Activated T-helper 1 cell treated with anti-CD3 and anti-CD28 coated beads, Interleukin-12 subunit alpha, Interleukin-12 subunit beta, Interleukin-2, Interleukin-4 antibody, amounts not matched to agents 30 ng/mL and 10 ng/mL and 1 ng/mL, durations not matched to agents 14 hours and 24 hours and 36 hours (primary cell): ENCODE measurements at regions of chr16 and their contacts with region 1.

Region 1: DNA sequence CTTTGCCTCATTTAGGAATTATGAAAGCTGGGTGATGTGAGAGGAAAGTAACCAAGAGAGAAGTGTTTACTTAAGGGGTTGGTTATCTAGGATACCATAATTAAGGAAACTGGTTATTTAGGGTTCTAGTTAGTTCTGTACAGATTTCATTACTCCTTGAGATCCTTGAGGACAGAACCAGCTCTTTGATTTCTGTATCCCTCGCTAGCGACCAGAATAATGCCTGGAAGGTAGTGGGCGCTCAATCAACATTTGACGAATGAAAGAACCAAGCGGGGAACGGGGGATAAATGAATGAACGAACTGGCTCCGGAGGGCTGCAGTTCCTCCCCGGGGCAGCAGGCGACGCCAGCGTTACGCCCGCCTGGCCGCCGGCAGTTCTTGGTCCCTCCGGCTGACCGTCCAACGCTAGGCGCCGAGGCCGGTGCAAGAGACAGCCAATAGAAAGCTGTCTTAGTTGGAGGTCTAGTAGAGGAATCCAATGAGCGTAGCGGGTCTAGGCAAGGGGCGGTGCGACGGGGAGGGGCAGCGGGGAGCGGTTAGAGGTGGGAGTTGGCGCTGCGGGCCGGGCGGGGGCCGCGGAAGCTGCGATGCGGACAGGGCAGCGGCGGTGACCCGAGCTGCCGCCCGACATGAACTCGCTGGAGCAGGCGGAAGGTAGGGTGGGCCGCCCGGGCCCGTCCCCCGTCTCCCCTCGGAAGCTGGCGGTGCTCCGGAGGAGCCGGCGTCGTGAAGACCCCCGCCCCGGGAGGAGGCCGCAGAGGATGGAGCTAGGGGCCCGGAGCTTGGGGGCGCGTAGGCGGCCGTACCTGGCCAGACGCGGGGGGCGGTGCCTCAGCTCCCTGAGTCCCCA is at the start of gene CNEP1R1:
- DNase-seq: peak; percentile 92
- H3K4me3 Mint-ChIP-seq: peak within 1 kb of the TSS; percentile 96
- H3K27ac Mint-ChIP-seq: peak within 1 kb of the TSS; percentile 84
- H3K4me1 Mint-ChIP-seq: peaks cover 26% of the 10 kb centered on the region
- H3K27me3 Mint-ChIP-seq: peaks cover 11% of the 10 kb centered on the region
- total RNA-seq, gene CNEP1R1: 21.9 and 22.7 TPM in 2 replicates

Region 2: GRCh38 chr16:49986351-49987124 is 38.4 kb before region 1 on chr16:
- intact Hi-C with region 1: no loop called
- DNase-seq: no peak
- H3K4me3 Mint-ChIP-seq: no peak overlapping the region
- H3K27ac Mint-ChIP-seq: no peak overlapping the region
- H3K4me1 Mint-ChIP-seq: no peaks in the 10 kb centered on the region
- H3K27me3 Mint-ChIP-seq: peaks cover 2% of the 10 kb centered on the region

Region 3: GRCh38 chr16:50065624-50066481 is 40.9 kb after region 1 on chr16 and contains the start of gene HEATR3:
- intact Hi-C with region 1: loop called (anchors 1 kb)
- DNase-seq: peak; percentile 93
- H3K4me3 Mint-ChIP-seq: peak within 1 kb of the TSS; percentile 85
- H3K27ac Mint-ChIP-seq: peak within 1 kb of the TSS; percentile 90
- H3K4me1 Mint-ChIP-seq: peaks cover 39% of the 10 kb centered on the region
- H3K27me3 Mint-ChIP-seq: no peaks in the 10 kb centered on the region
- total RNA-seq, gene HEATR3: 29.1 and 30.7 TPM in 2 replicates

Region 4: DNA sequence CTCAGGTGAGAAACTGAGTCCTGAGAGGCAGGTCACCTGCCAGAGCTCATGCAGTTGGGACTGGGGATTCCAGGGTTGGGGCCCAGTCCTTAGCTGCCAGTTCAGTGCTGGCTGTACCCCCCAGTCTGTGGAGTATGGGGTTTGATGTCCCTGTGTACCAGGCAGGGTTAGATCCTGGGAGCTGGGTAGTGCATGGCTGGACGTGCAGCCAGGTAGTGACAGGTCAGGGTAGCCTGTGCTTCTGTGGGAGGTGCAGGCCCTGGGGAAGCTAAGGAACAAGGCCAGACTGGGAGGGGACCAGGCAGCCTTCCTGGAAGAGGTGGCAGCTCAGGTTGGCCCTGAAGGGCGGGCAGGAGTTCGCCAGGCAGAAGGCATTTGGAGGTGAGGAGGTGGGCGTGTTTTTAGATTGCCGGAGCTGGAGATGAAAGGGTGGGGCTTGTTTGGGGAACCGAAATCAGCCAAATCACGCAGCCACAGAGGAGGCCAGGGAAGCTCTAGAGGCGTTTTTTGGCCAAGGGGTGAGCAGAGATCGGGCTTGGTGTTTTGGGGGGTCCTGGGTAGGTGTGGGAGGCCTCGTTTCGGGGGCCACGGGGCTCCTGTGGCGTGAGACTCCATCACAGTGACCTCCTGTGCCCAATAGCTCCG is 248.9 kb after region 1 on chr16:
- intact Hi-C with region 1: loop called (anchors 2 kb)
- DNase-seq: peak; percentile 20
- H3K4me3 Mint-ChIP-seq: peak overlapping the region; percentile 95
- H3K27ac Mint-ChIP-seq: peak overlapping the region; percentile 98
- H3K4me1 Mint-ChIP-seq: peaks cover 95% of the 10 kb centered on the region
- H3K27me3 Mint-ChIP-seq: no peaks in the 10 kb centered on the region

Region 5: GRCh38 chr16:50509521-50510341 is 484.8 kb after region 1 on chr16:
- intact Hi-C with region 1: loop called (anchors 1 kb)
- DNase-seq: peak; percentile 15
- H3K4me3 Mint-ChIP-seq: no peak overlapping the region
- H3K27ac Mint-ChIP-seq: no peak overlapping the region
- H3K4me1 Mint-ChIP-seq: no peaks in the 10 kb centered on the region
- H3K27me3 Mint-ChIP-seq: peaks cover 10% of the 10 kb centered on the region

Region 6: DNA sequence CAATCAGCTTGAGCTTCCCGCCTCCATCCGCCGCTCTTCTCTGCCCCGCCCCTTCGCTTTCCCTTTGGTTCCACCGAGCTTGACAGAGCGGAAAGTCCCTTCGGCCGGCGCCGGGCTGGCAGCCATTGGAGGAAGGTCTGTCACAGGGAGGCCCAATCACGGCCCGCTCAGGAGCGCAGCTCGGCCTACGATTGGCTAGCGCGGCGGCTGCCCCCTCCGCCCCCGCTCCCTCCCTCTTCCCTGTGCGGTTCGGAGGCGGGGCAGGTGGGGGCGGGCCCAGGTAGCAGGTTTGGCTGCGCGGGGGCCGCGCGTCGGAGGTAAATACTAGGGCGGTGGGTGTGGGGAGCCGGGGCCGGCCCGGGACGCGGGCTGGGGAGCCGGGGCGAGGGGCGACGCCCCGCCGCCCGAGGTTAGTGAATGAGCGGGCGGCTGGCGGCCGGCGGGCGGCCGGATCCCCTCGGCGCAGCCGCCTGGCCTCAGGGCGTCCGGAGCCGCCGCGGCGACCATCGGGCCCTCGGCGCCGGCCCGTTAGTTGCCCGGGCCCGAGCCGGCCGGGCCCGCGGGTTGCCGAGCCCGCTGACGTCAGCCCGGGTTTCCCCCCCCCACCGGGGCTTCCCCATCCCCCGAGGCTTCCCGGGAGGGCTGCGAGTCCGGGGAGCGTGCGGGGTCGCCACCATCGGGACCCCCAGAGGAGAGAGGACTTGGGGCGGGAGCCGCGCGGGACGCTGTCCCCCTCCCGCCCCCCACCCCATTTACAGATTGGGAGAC is 717.1 kb after region 1 on chr16 and contains the start of gene CYLD:
- intact Hi-C with region 1: loop called (anchors 2 kb)
- DNase-seq: peak; percentile 100
- H3K4me3 Mint-ChIP-seq: peak within 1 kb of the TSS; percentile 86
- H3K27ac Mint-ChIP-seq: peak within 1 kb of the TSS; percentile 93
- H3K4me1 Mint-ChIP-seq: peaks cover 64% of the 10 kb centered on the region
- H3K27me3 Mint-ChIP-seq: no peaks in the 10 kb centered on the region
- total RNA-seq, gene CYLD: 219 and 223 TPM in 2 replicates